Activated CD4-positive, alpha-beta T cell treated with anti-CD3 and anti-CD28 coated beads, Interleukin-2, amount 10 ng/mL, durations not matched to agents 7 days and 5 days (primary cell): ENCODE measurements at regions of chr21 and their contacts with region 1.

Region 1: GRCh38 chr21:42238185-42238934 is 19.4 kb downstream of the ABCG1 start:
- DNase-seq: peak; percentile 74
- H3K4me3 Mint-ChIP-seq: peak overlapping the region; percentile 27
- H3K27ac Mint-ChIP-seq: peak overlapping the region; percentile 88
- H3K4me1 Mint-ChIP-seq: peaks cover 73% of the 10 kb centered on the region
- H3K27me3 Mint-ChIP-seq: no peaks in the 10 kb centered on the region

Region 2: DNA sequence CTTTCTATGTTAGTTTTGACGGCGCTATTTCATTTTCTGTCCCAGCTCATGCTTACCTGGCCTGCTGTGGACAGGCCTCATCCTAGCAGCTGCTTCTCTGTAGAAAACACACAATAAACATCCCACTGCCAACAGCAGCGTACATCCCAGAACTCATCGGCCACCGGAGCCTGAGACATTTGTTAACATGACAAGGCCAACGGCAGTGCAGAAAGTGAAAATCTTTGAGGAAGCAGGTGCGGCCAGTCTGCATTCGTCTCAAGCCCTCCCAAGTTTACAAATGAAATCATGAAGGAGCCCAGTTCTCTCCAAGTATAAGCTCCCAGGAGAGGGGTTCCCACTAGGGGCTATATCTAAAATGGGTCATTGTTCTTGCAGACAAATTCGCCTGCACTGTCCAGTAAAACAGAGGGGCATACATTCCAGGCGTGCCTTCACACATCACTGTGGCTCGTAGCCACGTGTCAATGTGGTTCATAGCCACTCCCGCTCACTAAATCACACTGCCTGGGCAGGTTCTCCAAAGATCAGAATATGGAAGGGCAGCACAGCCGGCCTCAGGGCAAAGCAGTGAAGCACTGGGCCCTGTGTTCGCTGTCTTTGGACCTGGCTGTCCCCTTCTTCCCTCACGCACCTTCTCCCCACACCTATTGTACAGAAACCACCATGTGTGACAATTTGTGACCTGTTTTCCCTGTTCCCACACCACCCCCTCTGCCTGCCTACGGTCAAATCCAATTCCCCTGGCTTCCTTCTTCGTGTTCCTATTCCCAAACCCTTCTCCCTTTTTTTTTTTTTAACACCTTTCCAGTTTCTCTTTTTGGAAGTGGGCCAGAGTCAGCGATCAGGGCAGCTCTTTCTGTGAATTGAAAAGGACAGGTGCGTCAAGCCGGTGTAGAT is 46.4 kb before region 1 on chr21:
- CTCF ChIA-PET with region 1: interaction called, 14 read pairs
- POLR2A ChIA-PET with region 1: interaction called, 3 read pairs
- DNase-seq: no peak
- H3K4me3 Mint-ChIP-seq: no peak overlapping the region
- H3K27ac Mint-ChIP-seq: no peak overlapping the region
- H3K4me1 Mint-ChIP-seq: peaks cover 83% of the 10 kb centered on the region
- H3K27me3 Mint-ChIP-seq: no peaks in the 10 kb centered on the region

Region 3: DNA sequence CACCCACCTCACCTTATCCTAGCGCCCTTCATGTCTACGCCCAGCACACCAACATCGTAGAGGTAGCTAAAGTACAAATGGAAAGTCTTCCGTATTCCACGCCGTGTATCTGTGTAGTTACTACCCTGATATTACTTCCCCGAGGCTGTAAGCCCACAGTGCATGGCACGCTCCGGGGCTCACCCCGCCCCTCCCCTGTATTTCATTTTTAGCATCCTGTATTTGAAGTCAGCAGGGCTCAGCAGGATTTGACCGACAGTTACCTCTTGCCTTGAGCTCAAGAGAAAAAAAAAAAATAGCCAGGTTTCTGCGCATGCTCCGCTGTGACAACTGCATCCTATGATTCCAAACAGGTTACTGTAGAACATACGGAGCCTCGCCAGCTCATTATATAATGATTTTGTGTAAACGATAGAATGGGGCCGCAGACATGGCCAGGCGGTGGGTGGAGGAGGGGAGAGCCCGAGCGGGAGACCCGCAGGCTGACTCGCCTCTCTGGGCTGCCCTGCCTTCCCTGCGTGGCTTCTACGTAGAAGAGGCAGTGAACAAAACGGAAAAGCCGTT is 18.1 kb before region 1 on chr21:
- CTCF ChIA-PET with region 1: interaction called, 18 read pairs
- POLR2A ChIA-PET with region 1: interaction called, 5 read pairs
- DNase-seq: peak; percentile 85
- H3K4me3 Mint-ChIP-seq: peak overlapping the region; percentile 81
- H3K27ac Mint-ChIP-seq: peak overlapping the region; percentile 89
- H3K4me1 Mint-ChIP-seq: peaks cover 31% of the 10 kb centered on the region
- H3K27me3 Mint-ChIP-seq: no peaks in the 10 kb centered on the region

Region 4: DNA sequence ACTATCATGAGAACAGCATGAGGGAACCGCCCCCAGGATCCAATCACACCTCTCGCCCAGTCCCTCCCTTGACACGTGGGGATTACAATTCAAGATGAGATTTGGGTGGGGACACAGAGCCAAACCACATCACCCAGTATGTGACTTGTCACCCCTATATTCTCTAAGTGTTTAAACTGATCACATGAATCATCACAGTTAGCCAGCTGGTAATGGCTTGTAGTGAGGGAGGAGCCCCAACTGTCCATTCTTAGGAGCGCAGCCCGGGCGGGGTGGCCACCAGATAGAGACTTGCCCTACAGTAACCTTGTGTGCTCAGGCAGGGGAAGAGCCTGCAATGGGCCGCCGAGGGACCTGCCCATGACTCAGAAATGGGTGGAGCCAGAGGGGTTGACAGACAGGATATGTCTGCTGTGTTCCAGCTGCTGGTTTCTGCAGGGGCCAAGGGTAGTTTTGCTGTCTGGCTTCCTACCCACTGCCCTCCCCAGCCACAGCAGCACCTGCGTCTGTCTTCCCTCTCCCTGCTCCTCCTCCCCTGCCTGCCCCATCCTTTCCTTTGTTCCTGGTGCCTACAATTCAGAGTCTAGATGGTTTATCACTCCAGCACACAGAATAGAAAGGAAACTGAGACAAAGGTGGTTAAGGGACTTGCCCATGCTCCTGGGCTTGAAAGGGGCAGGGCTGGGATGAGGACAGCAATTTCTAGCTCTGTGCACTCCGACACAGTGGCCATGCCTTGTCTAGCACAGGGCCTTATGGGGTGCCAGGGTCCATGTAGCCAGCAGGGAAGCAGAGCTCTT is 10.3 kb before region 1 on chr21:
- CTCF ChIA-PET with region 1: interaction called, 18 read pairs
- POLR2A ChIA-PET with region 1: interaction called, 3 read pairs
- DNase-seq: peak; percentile 92
- H3K4me3 Mint-ChIP-seq: peak overlapping the region; percentile 40
- H3K27ac Mint-ChIP-seq: peak overlapping the region; percentile 85
- H3K4me1 Mint-ChIP-seq: peaks cover 85% of the 10 kb centered on the region
- H3K27me3 Mint-ChIP-seq: no peaks in the 10 kb centered on the region

Region 5: GRCh38 chr21:42258153-42258884 is 20.0 kb after region 1 on chr21:
- CTCF ChIA-PET with region 1: interaction called, 25 read pairs
- POLR2A ChIA-PET with region 1: no interaction called
- DNase-seq: peak; percentile 84
- H3K4me3 Mint-ChIP-seq: no peak overlapping the region
- H3K27ac Mint-ChIP-seq: no peak overlapping the region
- H3K4me1 Mint-ChIP-seq: peaks cover 19% of the 10 kb centered on the region
- H3K27me3 Mint-ChIP-seq: no peaks in the 10 kb centered on the region